Prostate gland (tissue), 2 donors: ENCODE measurements at regions of chr5 and their contacts with region 1.

Region 1: GRCh38 chr5:10761166-10761932 is at the start of gene DAP:
- DNase-seq: peak; percentile 74
- H3K4me3 ChIP-seq: peak within 1 kb of the TSS; percentile 76 to 84
- H3K27ac ChIP-seq: peak within 1 kb of the TSS; percentile 98 to 99
- H3K4me1 ChIP-seq: peaks cover 6% of the 10 kb centered on the region
- H3K27me3 ChIP-seq: no peaks in the 10 kb centered on the region
- CTCF ChIP-seq: peak in 1 of 4 experiments; percentile 13
- POLR2A ChIP-seq: peak; percentile 37
- total RNA-seq, gene DAP: 86.2 to 111 TPM

Region 2: GRCh38 chr5:10452768-10453331 is 308.5 kb before region 1 on chr5:
- intact Hi-C with region 1: loop called (anchors 10 kb)
- DNase-seq: no peak
- H3K4me3 ChIP-seq: no peak overlapping the region
- H3K27ac ChIP-seq: no peak overlapping the region
- H3K4me1 ChIP-seq: no peaks in the 10 kb centered on the region
- H3K27me3 ChIP-seq: no peaks in the 10 kb centered on the region
- CTCF ChIP-seq: peak; percentile 30 to 88 (median 66)
- POLR2A ChIP-seq: no peak

Region 3: GRCh38 chr5:10601246-10602030 is 159.9 kb before region 1 on chr5:
- intact Hi-C with region 1: no loop called
- DNase-seq: peak; percentile 58
- H3K4me3 ChIP-seq: no peak overlapping the region
- H3K27ac ChIP-seq: peak overlapping the region; percentile 1 to 10
- H3K4me1 ChIP-seq: no peaks in the 10 kb centered on the region
- H3K27me3 ChIP-seq: no peaks in the 10 kb centered on the region
- CTCF ChIP-seq: no peak
- POLR2A ChIP-seq: no peak

Region 4: GRCh38 chr5:10695055-10695649 is 66.2 kb before region 1 on chr5:
- intact Hi-C with region 1: loop called (anchors 5 kb)
- DNase-seq: peak; percentile 75
- H3K4me3 ChIP-seq: no peak overlapping the region
- H3K27ac ChIP-seq: no peak overlapping the region
- H3K4me1 ChIP-seq: no peaks in the 10 kb centered on the region
- H3K27me3 ChIP-seq: no peaks in the 10 kb centered on the region
- CTCF ChIP-seq: peak in 3 of 4 experiments; percentile 78 to 85 (median 85)
- POLR2A ChIP-seq: no peak

Region 5: GRCh38 chr5:10712574-10713517 is 48.5 kb before region 1 on chr5:
- intact Hi-C with region 1: no loop called
- DNase-seq: no peak
- H3K4me3 ChIP-seq: no peak overlapping the region
- H3K27ac ChIP-seq: no peak overlapping the region
- H3K4me1 ChIP-seq: no peaks in the 10 kb centered on the region
- H3K27me3 ChIP-seq: no peaks in the 10 kb centered on the region
- CTCF ChIP-seq: no peak
- POLR2A ChIP-seq: no peak